Activated naive CD4-positive, alpha-beta T cell treated with anti-CD3 and anti-CD28 coated beads for 36 hours (primary cell): ENCODE measurements at regions of chr22 and their contacts with region 1.

Region 1: DNA sequence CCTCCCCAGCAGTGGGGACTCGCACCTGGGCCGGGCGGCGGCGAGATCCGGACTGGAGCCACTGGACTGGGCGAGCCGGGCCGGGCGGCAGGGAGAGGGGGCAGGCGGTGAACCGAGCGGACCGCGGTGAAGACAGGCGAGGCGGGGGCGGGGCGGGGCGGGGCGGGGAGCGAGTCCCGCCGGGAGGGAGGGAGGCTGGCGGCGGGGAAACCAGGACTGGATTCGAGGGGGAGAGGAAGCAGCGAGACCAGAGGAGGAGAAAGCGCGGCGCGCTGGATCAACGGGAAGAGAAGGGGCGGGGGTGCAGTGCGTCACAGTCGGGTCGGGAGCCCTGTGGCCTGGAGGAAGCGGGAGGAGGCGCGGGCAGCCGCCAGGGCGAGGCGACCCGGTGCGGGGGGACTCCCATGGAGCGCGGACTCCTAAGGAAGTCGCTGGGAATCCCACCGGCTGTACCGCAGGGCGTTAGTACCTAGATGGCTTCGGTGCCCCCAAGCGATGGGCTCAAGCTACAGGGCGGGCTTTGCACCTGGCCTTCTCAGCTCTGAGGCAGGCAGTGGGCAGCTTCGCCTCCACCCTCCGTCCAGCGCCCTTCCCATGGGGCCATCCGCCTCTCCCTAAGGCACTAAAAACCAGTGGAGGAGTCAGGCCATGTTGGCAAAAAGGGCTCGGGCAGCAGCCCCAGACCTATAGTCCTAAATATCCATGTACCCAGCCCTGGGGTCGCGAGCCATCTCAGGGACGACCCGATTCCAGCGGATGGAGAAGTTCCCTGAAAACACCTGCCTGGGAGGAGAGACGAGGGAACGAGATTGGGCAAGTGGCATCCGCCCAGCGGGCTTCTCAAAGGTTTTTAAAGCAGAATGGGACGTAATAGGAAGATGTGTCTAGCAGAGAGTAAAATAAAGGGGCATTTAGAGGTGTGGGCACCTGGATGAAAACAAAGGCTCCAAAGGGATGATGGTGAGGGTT is at the start of gene TMEM121B:
- DNase-seq: peak; percentile 54
- H3K4me3 Mint-ChIP-seq: peak within 1 kb of the TSS; percentile 62
- H3K27ac Mint-ChIP-seq: no peak within 1 kb of the TSS
- H3K4me1 Mint-ChIP-seq: peaks cover 38% of the 10 kb centered on the region
- H3K27me3 Mint-ChIP-seq: peaks cover 11% of the 10 kb centered on the region
- total RNA-seq, gene TMEM121B: 0.19 to 0.22 TPM

Region 2: GRCh38 chr22:17057959-17058814 is 63.3 kb before region 1 on chr22:
- CTCF ChIA-PET with region 1: no interaction called
- intact Hi-C with region 1: no loop called
- DNase-seq: peak; percentile 70
- H3K4me3 Mint-ChIP-seq: no peak overlapping the region
- H3K27ac Mint-ChIP-seq: no peak overlapping the region
- H3K4me1 Mint-ChIP-seq: peaks cover 5% of the 10 kb centered on the region
- H3K27me3 Mint-ChIP-seq: no peaks in the 10 kb centered on the region

Region 3: GRCh38 chr22:17098379-17098819 is 23.1 kb before region 1 on chr22:
- CTCF ChIA-PET with region 1: interaction called, 5 read pairs
- intact Hi-C with region 1: loop called (anchors 1 kb)
- DNase-seq: peak; percentile 60
- H3K4me3 Mint-ChIP-seq: no peak overlapping the region
- H3K27ac Mint-ChIP-seq: no peak overlapping the region
- H3K4me1 Mint-ChIP-seq: peaks cover 86% of the 10 kb centered on the region
- H3K27me3 Mint-ChIP-seq: no peaks in the 10 kb centered on the region